Lower lobe of right lung (tissue), 2 donors: ENCODE measurements at regions of chr19 and their contacts with region 1.

Region 1: DNA sequence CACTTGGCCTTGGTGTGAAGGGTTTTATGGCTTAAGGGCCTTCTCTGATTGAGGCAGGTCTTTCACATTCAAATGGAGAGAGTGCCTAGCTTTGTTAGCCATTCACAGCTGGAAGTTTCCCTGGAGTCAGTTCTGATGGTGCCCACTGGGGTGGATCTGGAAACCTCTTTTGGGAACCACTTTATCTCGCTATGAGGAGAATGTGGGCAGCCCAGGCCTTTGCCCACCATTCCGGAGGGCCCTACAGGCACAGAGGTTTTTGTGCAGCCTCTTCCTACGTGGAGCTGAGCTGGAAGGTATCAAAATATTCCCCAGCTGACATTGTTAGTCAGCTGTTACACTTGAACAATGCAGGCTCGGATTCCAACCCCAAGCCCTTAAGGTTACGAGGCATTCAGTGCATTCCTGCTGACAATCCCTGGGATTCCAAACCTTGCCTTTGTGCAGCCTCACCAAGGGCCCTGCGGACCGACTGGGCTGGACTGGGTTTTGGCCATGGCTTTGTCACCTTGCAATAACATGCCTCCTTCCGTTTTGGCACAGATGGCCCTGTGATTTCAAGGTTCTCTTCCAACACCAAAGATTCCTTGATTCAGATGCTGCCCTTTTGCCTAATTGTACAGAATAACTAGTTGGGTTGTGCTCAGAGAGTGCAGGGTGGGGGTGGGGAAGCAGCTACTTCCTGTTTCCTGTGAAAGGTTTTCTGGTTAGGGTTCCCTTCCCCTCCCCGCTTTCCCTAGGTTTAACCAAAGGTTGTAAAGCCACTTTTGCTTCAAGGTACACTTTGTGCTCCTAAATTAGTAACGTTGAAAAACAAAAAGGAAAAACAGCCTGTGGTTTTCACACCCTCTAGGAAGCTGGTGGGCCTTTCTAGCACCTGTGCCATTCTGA is 27.0 kb downstream of the SAE1 start:
- DNase-seq: no peak
- ATAC-seq: peak; percentile 66 to 71
- H3K4me3 ChIP-seq: peak overlapping the region; percentile 3
- H3K27ac ChIP-seq: peak overlapping the region; percentile 77
- H3K4me1 ChIP-seq: peaks cover 62% of the 10 kb centered on the region
- H3K27me3 ChIP-seq: no peaks in the 10 kb centered on the region
- CTCF ChIP-seq: no peak

Region 2: GRCh38 chr19:47112997-47113849 is 44.5 kb before region 1 on chr19 and contains the start of gene ZC3H4:
- intact Hi-C with region 1: no loop called
- DNase-seq: peak; percentile 99
- ATAC-seq: peak; percentile 95 to 98
- H3K4me3 ChIP-seq: peak within 1 kb of the TSS; percentile 89
- H3K27ac ChIP-seq: peak within 1 kb of the TSS; percentile 100
- H3K4me1 ChIP-seq: peaks cover 32% of the 10 kb centered on the region
- H3K27me3 ChIP-seq: no peaks in the 10 kb centered on the region
- CTCF ChIP-seq: no peak
- total RNA-seq, gene ZC3H4: 49.3 TPM

Region 3: GRCh38 chr19:47209319-47210179 is 51.9 kb after region 1 on chr19:
- intact Hi-C with region 1: loop called (anchors 10 kb)
- DNase-seq: no peak
- ATAC-seq: no peak
- H3K4me3 ChIP-seq: no peak overlapping the region
- H3K27ac ChIP-seq: no peak overlapping the region
- H3K4me1 ChIP-seq: peaks cover 12% of the 10 kb centered on the region
- H3K27me3 ChIP-seq: no peaks in the 10 kb centered on the region
- CTCF ChIP-seq: no peak